Activated CD8-positive, alpha-beta T cell treated with anti-CD3 and anti-CD28 coated beads for 36 hours (primary cell): ENCODE measurements at regions of chr1 and their contacts with region 1.

Region 1: GRCh38 chr1:246724016-246724730 is at the start of gene SCCPDH:
- DNase-seq: peak; percentile 83
- ATAC-seq: peak; percentile 98
- H3K4me3 Mint-ChIP-seq: peak within 1 kb of the TSS; percentile 87
- H3K27ac Mint-ChIP-seq: peak within 1 kb of the TSS; percentile 92
- H3K4me1 Mint-ChIP-seq: peaks cover 13% of the 10 kb centered on the region
- H3K27me3 Mint-ChIP-seq: no peaks in the 10 kb centered on the region
- CTCF ChIP-seq: no peak
- total RNA-seq, gene SCCPDH: 39.4 to 41.7 TPM

Region 2: GRCh38 chr1:246709835-246710234 is 14.3 kb before region 1 on chr1:
- CTCF ChIA-PET with region 1: no interaction called
- POLR2A ChIA-PET with region 1: interaction called, 13 read pairs
- intact Hi-C with region 1: no loop called
- DNase-seq: no peak
- ATAC-seq: no peak
- H3K4me3 Mint-ChIP-seq: no peak overlapping the region
- H3K27ac Mint-ChIP-seq: no peak overlapping the region
- H3K4me1 Mint-ChIP-seq: peaks cover 2% of the 10 kb centered on the region
- H3K27me3 Mint-ChIP-seq: peaks cover 6% of the 10 kb centered on the region
- CTCF ChIP-seq: no peak